HEK293T (cell line): ENCODE measurements at regions of chr1 and their contacts with region 1.

Region 1: DNA sequence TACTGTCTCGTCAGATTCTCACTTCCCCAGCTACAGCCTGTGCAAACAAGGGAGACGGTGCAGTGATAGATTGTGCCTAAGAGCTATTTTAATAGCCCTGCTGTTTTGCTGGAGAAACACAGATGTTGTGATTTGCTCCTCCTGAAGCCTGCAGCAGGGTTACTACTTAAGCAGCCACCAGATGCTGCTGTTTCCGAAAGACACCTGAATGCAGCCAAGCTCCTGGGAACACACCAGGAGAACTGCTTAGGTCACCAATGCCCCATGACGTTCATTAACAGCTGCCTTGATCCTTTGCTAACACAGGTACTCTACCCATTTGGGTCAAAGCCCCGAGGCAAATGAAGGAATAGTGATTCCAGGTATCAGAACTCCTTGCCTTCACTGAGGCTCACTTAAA is 411.8 kb upstream of the DAB1 start:
- DNase-seq: no peak

Region 2: DNA sequence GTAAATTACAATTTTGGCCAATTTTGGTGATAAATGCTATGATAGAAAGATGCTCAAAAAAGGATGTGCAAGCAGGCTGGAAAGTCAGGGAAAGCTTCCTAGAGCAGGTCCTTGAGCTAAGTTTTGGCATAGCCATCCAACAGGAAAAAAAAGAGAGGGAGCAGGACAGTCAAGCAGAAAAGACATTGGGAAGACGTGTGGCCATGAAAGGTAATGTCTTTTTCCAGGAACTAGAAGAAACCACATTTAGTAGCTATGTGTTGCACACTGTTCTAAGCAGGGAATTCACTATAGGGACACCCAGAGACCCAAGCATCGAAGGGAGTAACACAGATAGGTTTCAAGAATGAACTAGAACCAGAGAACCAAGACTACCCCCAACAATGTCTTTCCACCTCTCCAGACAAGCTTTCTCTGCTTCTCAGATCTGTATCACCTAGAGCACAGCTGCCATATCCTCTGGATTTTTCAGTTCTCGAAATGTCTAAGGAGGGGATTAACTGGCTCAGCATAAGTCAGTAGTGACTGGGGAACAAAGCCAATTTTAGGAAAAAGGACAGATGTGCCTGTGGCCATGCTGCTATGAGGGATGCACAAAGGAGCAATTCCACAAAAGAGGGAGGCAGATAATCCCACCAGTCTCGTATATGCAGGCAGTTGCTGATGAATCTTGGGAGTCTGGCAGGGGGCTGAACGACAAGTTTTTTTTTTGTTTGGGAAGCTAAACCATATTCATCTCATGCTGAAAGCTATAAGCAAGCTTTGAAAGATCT is 314.7 kb before region 1 on chr1:
- CTCF ChIA-PET with region 1: interaction called, 12 read pairs
- POLR2A ChIA-PET with region 1: no interaction called
- DNase-seq: no peak

Region 3: GRCh38 chr1:57761628-57762027 is 74.0 kb before region 1 on chr1:
- CTCF ChIA-PET with region 1: no interaction called
- POLR2A ChIA-PET with region 1: no interaction called
- DNase-seq: no peak

Region 4: DNA sequence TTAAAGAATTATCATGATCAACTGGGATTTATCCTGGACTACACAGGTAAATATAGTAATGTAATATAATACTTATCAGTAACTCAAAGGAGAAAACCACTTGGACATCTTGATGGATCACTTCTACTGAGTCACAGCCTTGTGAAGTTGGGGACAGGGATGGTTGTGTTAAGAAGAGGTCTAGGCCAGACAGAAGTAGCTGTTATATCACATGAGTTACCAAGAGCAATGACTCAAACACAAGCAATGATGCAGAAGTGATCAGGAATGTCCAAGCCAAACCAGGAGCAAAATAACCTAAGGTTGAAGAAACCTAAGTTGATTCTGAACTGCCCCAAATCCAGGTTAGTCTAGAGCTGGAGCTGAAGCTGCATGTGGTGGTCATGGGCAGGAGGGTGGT is 12.8 kb after region 1 on chr1:
- CTCF ChIA-PET with region 1: no interaction called
- POLR2A ChIA-PET with region 1: no interaction called
- DNase-seq: no peak

Region 5: DNA sequence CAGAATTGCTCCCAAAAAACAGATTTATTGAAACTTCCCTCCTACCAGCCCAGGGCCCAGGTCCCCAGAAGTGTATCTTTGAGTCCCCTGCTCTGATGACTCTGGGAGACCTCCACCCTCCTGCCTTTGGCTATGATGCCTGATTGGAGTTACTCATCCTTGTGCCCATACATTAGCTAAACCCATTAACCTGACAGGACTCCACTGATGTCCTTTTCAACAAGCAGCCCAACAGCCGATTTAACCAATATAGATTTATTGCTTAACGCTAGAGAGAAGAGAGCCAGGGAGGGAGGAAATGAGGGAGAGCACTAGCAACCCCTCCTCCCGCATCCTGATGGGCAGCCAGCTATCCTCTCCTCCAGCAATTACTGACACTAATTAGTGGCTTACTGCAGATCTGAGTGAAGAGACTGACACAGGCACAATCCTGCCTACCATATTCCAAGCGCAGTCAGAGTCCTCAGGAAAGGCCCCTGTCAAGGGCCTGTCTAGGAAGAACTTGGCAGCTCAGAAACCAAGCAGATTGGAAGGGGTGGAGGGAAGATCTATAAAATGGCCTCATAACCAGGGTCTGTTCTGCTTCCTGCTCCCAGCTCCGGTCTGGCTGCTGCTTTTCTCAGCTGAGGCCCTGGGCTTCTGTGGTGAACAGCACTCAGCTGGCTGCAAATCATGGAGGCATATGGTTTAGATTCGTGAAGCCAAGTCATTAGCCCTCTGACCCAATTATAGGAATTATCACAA is 72.7 kb after region 1 on chr1:
- CTCF ChIA-PET with region 1: no interaction called
- POLR2A ChIA-PET with region 1: no interaction called
- DNase-seq: no peak